ENCODE measurements at regions of chr14 and their contacts with region 1.

Region 1: DNA sequence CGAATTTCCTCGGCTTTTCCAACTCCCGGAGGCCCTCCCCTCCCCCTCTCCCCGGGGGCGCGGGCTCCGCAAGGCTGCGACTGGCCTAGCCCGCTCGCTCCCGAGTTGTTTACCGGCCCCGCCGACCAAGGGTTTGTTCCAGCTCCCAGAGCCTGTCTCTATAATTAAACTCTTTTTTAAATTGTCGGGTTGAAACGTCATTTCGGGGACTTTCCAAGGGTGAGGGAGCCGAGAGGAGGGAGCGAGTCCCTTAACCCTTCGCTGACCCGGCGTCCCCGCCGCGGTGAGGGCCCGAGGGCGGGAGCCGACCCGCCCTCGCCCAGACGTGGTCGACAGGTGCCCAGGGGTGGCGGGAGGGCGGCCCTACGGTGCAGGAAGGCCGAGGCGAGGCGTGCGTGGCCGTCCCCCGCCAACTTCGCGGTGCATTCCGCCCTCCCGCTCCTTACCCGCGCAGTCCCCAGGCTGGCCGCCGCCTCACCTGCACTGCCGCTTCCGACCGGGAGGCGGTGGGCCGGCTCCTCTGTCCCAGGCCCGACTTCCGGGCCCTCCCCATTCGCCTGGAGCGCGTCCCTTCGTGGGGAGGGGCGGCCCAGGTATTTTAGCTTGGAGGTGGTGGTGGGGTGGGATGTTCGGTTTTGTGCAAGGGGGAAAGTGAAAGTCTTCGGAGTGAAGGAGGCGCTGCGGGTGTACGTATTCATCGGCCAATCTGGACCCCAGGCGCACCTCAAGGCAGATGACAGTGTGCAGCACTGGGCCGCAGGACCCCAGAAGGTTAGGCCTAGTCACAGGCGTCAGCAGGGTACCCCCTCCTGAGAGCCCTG is 2.9 kb upstream of the ZFP36L1 start:
- DNase-seq: peak; percentile 87 to 92 (median 90)
- ATAC-seq: peak; percentile 24 to 72 (median 48)
- H3K4me3 ChIP-seq: peak overlapping the region; percentile 60 to 94 (median 84)
- H3K27ac ChIP-seq: peak overlapping the region; percentile 98 to 100 (median 99)
- H3K4me1 ChIP-seq: peaks cover 0 to 17% (median 9%) of the 10 kb centered on the region in 12 donors
- H3K27me3 ChIP-seq: no peaks in the 10 kb centered on the region
- CTCF ChIP-seq: peak; percentile 47 to 88 (median 76)
- POLR2A ChIP-seq: peak in 1 of 2 donors; percentile 88

Region 2: GRCh38 chr14:68377459-68377858 is 418.3 kb before region 1 on chr14:
- intact Hi-C with region 1: loop called in 1 of 10 experiments (anchors 5 kb)
- DNase-seq: peak; percentile 56 to 80 (median 74)
- ATAC-seq: peak; percentile 68 to 95 (median 92)
- H3K4me3 ChIP-seq: no peak overlapping the region
- H3K27ac ChIP-seq: peak overlapping the region; percentile 33 to 88 (median 77)
- H3K4me1 ChIP-seq: peaks cover 0 to 77% (median 23%) of the 10 kb centered on the region in 12 donors
- H3K27me3 ChIP-seq: no peaks in the 10 kb centered on the region
- CTCF ChIP-seq: no peak
- POLR2A ChIP-seq: no peak

Region 3: GRCh38 chr14:68392393-68393141 is 403.2 kb before region 1 on chr14:
- intact Hi-C with region 1: loop called in 3 of 10 experiments (anchors 5 to 10 kb)
- DNase-seq: peak; percentile 62 to 80 (median 73)
- ATAC-seq: peak in 3 of 4 donors; percentile 47 to 52 (median 50)
- H3K4me3 ChIP-seq: no peak overlapping the region
- H3K27ac ChIP-seq: peak overlapping the region; percentile 46 to 92 (median 66)
- H3K4me1 ChIP-seq: peaks cover 4 to 75% (median 31%) of the 10 kb centered on the region in 12 donors
- H3K27me3 ChIP-seq: no peaks in the 10 kb centered on the region
- CTCF ChIP-seq: no peak
- POLR2A ChIP-seq: no peak

Region 4: DNA sequence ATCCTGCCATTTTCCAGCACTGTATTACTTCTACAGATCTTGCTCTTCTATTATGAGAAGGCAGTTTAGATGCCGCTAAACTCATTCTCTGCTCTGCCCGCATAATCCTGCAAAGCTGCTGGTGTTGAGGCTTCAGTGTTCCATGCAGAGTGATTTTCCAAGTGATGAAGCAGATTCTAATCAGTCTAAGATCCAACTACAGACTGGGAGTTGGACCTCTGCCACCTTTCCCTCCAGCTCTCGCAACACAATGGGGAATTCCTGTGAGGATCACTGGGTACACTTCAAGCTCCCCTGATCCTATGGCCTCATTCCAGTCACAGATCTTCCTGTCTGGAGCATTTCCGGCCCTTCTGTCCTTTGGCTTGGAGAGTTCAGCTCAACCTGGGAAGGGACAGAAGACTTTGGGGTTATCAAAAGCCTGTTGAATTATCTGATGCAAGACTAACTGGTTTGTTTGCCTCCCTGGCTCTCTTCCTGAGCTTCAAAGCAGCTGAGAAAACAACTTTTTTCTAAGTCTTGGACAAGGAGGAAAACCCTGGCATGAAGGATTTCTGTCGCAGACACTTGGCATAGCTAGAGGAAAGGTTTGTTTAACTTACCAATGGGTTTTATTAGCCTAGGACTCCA is 336.9 kb before region 1 on chr14:
- intact Hi-C with region 1: loop called in 2 of 10 experiments (anchors 5 to 10 kb)
- DNase-seq: peak in 4 of 5 donors; percentile 54 to 65 (median 56)
- ATAC-seq: peak; percentile 54 to 81 (median 78)
- H3K4me3 ChIP-seq: no peak overlapping the region
- H3K27ac ChIP-seq: peak overlapping the region in 10 of 12 donors; percentile 9 to 70 (median 43)
- H3K4me1 ChIP-seq: peaks cover 0 to 32% (median 21%) of the 10 kb centered on the region in 12 donors
- H3K27me3 ChIP-seq: no peaks in the 10 kb centered on the region
- CTCF ChIP-seq: no peak
- POLR2A ChIP-seq: no peak

Region 5: GRCh38 chr14:68548194-68549056 is 247.4 kb before region 1 on chr14:
- intact Hi-C with region 1: loop called in 4 of 10 experiments (anchors 2 to 5 kb)
- DNase-seq: peak; percentile 88 to 96 (median 92)
- ATAC-seq: peak; percentile 89 to 94 (median 92)
- H3K4me3 ChIP-seq: no peak overlapping the region
- H3K27ac ChIP-seq: peak overlapping the region; percentile 87 to 99 (median 96)
- H3K4me1 ChIP-seq: peaks cover 11 to 89% (median 63%) of the 10 kb centered on the region in 12 donors
- H3K27me3 ChIP-seq: no peaks in the 10 kb centered on the region
- CTCF ChIP-seq: no peak
- POLR2A ChIP-seq: peak in 1 of 2 donors; percentile 47

Region 6: DNA sequence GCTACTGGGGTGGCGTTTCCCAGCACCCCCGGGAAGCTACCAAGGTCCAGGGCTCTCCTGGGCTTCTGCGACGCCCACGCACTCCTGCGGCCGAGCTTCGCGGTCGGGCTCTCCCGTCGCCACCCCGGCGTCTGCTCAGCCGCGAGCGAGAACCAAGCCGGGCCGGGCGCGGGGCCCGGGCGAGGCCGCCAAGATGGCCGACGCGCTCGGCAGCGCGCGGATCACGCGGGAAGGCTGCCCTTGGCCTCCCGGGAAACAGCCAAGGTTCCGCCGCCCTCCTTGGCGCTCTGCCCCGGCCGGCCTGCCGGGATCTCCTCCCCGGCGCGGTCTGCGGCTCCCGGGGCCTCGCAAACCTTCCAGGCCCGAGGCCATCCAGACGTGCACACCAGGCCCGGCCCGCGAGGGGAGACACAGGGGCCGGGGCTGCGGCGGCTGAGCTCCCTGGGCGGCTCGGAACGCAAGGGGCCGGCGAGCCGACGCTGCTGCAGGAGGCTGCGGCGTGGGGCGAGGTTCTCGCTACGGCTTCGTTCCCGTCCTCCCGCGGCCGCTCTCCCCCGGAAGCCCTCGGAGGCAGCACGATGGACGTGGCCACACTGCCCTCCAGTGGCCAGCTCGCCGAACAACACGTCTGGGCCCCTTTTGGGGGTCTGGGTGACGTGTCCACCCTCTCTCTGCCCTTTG is 20.6 kb after region 1 on chr14:
- intact Hi-C with region 1: loop called in 6 of 10 experiments (anchors 1 to 2 kb)
- DNase-seq: peak; percentile 91 to 96 (median 92)
- ATAC-seq: peak; percentile 89 to 96 (median 94)
- H3K4me3 ChIP-seq: peak overlapping the region; percentile 17 to 70 (median 56)
- H3K27ac ChIP-seq: peak overlapping the region; percentile 96 to 100 (median 98)
- H3K4me1 ChIP-seq: peaks cover 0 to 61% (median 36%) of the 10 kb centered on the region in 12 donors
- H3K27me3 ChIP-seq: no peaks in the 10 kb centered on the region
- CTCF ChIP-seq: peak in 11 of 12 donors; percentile 94 to 99 (median 97)
- POLR2A ChIP-seq: peak in 1 of 2 donors; percentile 51

Measured in heart left ventricle (tissue), 16 donors.